Heart left ventricle (tissue), 16 donors: ENCODE measurements at regions of chr22 and their contacts with region 1.

Region 1: GRCh38 chr22:40024201-40025061 is 29.7 kb downstream of the FAM83F start:
- DNase-seq: peak; percentile 51 to 80 (median 61)
- ATAC-seq: peak; percentile 74 to 89 (median 84)
- H3K4me3 ChIP-seq: no peak overlapping the region
- H3K27ac ChIP-seq: no peak overlapping the region
- H3K4me1 ChIP-seq: peaks cover 0 to 9% (median 0%) of the 10 kb centered on the region in 12 donors
- H3K27me3 ChIP-seq: peaks cover 0 to 19% (median 0%) of the 10 kb centered on the region in 9 donors
- CTCF ChIP-seq: peak; percentile 68 to 89 (median 84)
- POLR2A ChIP-seq: no peak

Region 2: GRCh38 chr22:39559454-39560105 is 464.9 kb before region 1 on chr22:
- intact Hi-C with region 1: loop called in 3 of 10 experiments (anchors 5 kb)
- DNase-seq: no peak
- ATAC-seq: peak in 2 of 4 donors; percentile 25
- H3K4me3 ChIP-seq: no peak overlapping the region
- H3K27ac ChIP-seq: no peak overlapping the region
- H3K4me1 ChIP-seq: peaks cover 0 to 22% (median 0%) of the 10 kb centered on the region in 12 donors
- H3K27me3 ChIP-seq: peaks cover 16 to 71% (median 29%) of the 10 kb centered on the region in 9 donors
- CTCF ChIP-seq: peak in 9 of 12 donors; percentile 15 to 39 (median 30)
- POLR2A ChIP-seq: no peak

Region 3: GRCh38 chr22:39622881-39623367 is 401.5 kb before region 1 on chr22:
- intact Hi-C with region 1: loop called (anchors 2 to 10 kb)
- DNase-seq: peak; percentile 32 to 82 (median 40)
- ATAC-seq: peak; percentile 38 to 58 (median 52)
- H3K4me3 ChIP-seq: no peak overlapping the region
- H3K27ac ChIP-seq: no peak overlapping the region
- H3K4me1 ChIP-seq: no peaks in the 10 kb centered on the region
- H3K27me3 ChIP-seq: peaks cover 5 to 88% (median 34%) of the 10 kb centered on the region in 9 donors
- CTCF ChIP-seq: peak; percentile 32 to 62 (median 50)
- POLR2A ChIP-seq: no peak

Region 4: DNA sequence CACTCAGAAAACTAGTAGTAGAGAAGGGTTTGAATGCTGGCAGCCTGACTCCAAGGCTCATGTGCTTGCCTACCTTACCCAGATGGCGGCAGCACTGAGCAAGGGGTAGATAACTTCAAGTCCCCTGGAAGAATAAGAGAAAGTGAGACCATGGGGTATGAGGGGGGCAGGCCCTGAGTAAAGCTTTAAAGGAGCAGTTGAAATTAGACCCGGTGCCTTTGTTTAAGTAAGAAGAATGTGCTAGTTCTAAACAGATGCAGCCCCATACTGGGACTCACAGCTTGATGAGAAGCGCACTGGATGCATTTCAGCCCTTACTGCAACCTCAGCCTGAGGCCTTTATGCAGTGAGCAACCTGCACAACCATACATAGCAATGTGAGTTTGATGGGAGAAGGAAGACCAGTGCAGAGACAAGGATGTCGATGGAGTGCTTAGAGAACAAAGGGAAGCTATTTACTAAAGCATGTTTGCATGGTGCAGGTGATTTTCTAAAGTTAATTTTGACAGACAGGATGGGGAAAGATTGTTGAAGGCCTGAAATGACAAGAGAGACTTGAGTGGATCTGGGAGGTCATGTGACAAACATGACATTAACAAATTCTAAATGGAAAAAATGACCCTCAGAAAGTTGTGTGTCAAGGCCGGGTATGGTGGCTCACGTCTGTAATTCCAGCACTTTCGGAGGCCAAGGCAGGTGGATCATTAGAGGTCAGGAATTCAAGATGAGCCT is 91.3 kb before region 1 on chr22:
- intact Hi-C with region 1: loop called in 4 of 10 experiments (anchors 2 to 10 kb)
- DNase-seq: peak in 1 of 5 donors; percentile 31
- ATAC-seq: no peak
- H3K4me3 ChIP-seq: no peak overlapping the region
- H3K27ac ChIP-seq: no peak overlapping the region
- H3K4me1 ChIP-seq: peaks cover 0 to 25% (median 0%) of the 10 kb centered on the region in 12 donors
- H3K27me3 ChIP-seq: peaks cover 0 to 57% (median 11%) of the 10 kb centered on the region in 9 donors
- CTCF ChIP-seq: peak; percentile 26 to 64 (median 45)
- POLR2A ChIP-seq: no peak

Region 5: GRCh38 chr22:40067639-40068038 is 43.2 kb after region 1 on chr22:
- intact Hi-C with region 1: no loop called
- DNase-seq: no peak
- ATAC-seq: peak in 3 of 4 donors; percentile 24 to 40 (median 36)
- H3K4me3 ChIP-seq: no peak overlapping the region
- H3K27ac ChIP-seq: no peak overlapping the region
- H3K4me1 ChIP-seq: peaks cover 0 to 40% (median 24%) of the 10 kb centered on the region in 12 donors
- H3K27me3 ChIP-seq: no peaks in the 10 kb centered on the region
- CTCF ChIP-seq: no peak
- POLR2A ChIP-seq: no peak

Region 6: DNA sequence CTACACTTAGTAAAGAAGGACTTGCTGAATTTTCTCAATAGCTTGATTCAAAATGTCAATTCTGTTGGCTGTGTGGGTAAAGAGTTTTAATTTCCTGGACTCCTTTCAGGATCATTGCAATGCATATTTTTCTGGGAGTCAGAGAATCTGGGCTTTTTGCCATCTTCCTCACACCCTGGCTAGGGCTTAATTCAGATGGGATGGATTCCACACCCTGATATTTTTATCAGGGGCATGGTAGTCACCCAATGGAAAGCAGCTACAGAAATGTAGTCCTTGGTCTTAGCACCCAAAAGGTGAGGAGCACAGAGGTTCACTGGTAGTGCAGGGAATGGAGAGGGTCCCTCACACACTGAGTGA is 425.2 kb after region 1 on chr22:
- intact Hi-C with region 1: no loop called
- DNase-seq: no peak
- ATAC-seq: peak in 2 of 4 donors; percentile 13 to 20
- H3K4me3 ChIP-seq: no peak overlapping the region
- H3K27ac ChIP-seq: peak overlapping the region in 2 of 12 donors; percentile 40 to 61
- H3K4me1 ChIP-seq: peaks cover 0 to 96% (median 44%) of the 10 kb centered on the region in 12 donors
- H3K27me3 ChIP-seq: no peaks in the 10 kb centered on the region
- CTCF ChIP-seq: no peak
- POLR2A ChIP-seq: no peak